ENCODE measurements at regions of chr9 and their contacts with region 1.

Region 1: GRCh38 chr9:89522261-89522958 is 24.5 kb upstream of the SEMA4D start:
- DNase-seq: peak; percentile 89
- H3K4me3 Mint-ChIP-seq: peak overlapping the region; percentile 58
- H3K27ac Mint-ChIP-seq: peak overlapping the region; percentile 92
- H3K4me1 Mint-ChIP-seq: peaks cover 89% of the 10 kb centered on the region
- H3K27me3 Mint-ChIP-seq: no peaks in the 10 kb centered on the region

Region 2: DNA sequence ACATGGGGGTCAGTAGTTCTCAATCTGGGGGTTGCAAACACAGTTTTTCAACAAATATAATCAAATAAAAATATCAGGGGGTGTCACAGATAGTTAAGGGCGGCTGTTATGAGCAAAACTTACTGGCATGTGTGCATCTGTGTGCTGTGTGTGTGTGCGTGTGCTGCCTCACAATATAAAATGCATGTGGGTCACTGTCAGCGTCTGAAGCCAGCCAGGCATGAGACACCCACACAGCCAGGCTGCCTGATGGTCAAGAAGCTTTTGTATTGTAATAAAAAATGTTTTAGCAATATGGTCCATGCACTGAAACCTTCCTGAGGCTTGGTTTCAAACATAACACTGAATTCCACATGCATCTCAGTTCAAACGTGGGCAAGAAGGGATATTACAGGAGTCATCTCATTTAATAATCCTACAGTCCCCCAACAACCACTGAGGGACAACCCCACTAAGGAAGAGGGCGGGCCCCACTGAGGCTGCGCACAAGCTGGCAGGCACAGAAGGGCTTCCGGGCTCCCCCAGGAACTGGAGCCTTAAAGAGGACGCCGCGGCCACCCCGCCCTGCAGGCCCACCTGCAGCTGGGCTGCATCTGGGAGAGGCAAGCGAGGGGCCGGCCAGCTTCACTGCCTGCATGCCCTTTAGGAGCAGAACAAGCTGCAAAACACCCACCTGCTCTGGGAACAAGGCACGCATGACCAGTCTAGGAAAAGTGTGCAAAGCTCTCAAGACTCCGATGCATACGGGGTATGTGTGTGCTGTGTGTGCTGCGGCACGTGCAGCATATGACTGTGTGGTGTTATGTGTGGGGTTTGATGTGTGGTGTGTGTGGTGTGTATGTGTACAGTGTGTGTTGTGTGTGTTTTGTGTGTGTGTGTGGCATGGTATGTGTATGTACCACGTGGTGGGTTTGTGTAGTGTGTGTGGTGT is 38.6 kb before region 1 on chr9:
- CTCF ChIA-PET with region 1: no interaction called
- POLR2A ChIA-PET with region 1: interaction called, 3 read pairs
- intact Hi-C with region 1: loop called (anchors 5 kb)
- DNase-seq: peak; percentile 74
- H3K4me3 Mint-ChIP-seq: peak overlapping the region; percentile 87
- H3K27ac Mint-ChIP-seq: peak overlapping the region; percentile 90
- H3K4me1 Mint-ChIP-seq: peaks cover 89% of the 10 kb centered on the region
- H3K27me3 Mint-ChIP-seq: no peaks in the 10 kb centered on the region

Region 3: GRCh38 chr9:89497978-89498851 is 24.2 kb before region 1 on chr9 and contains the start of gene SEMA4D:
- CTCF ChIA-PET with region 1: interaction called, 3 read pairs
- POLR2A ChIA-PET with region 1: interaction called, 4 read pairs
- intact Hi-C with region 1: loop called (anchors 1 kb)
- DNase-seq: peak; percentile 81
- H3K4me3 Mint-ChIP-seq: peak within 1 kb of the TSS; percentile 81
- H3K27ac Mint-ChIP-seq: peak within 1 kb of the TSS; percentile 90
- H3K4me1 Mint-ChIP-seq: peaks cover 73% of the 10 kb centered on the region
- H3K27me3 Mint-ChIP-seq: no peaks in the 10 kb centered on the region
- total RNA-seq, gene SEMA4D: 159 to 161 TPM

Measured in activated CD4-positive, alpha-beta memory T cell treated with anti-CD3 and anti-CD28 coated beads for 36 hours (primary cell).